ENCODE measurements at regions of chr4 and their contacts with region 1.

Region 1: DNA sequence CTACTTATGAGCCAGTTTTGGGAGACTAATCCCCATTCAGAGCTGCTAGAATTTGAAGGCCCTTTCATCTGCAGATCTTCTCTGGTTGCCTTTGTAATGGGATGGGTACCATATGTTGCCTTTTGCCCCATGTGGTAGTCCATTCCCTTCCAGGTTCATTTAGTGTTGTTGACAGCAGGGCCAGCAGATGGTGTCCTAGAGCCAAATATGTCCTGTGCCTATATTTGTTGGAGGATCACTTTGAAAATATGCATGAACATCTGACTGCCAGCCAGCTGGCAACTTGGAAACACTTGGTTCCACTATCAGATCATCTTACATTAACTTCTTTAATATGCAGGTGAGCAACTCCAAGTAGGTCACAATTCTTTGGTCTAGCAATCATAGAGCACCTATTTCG is 30.4 kb downstream of the CFAP299 start:
- DNase-seq: peak in 3 of 4 experiments; percentile 17 to 53 (median 41)
- ATAC-seq: peak; percentile 87
- H3K4me3 ChIP-seq: no peak overlapping the region
- H3K27ac ChIP-seq: no peak overlapping the region
- H3K4me1 ChIP-seq: no peaks in the 10 kb centered on the region
- H3K27me3 ChIP-seq: no peaks in the 10 kb centered on the region
- CTCF ChIP-seq: peak; percentile 69 to 76 (median 73)
- EP300 ChIP-seq: no peak
- POLR2A ChIP-seq: no peak
- RAD21 ChIP-seq: peak; percentile 91 to 93

Region 2: GRCh38 chr4:78951862-78952472 is 1414.0 kb before region 1 on chr4:
- CTCF ChIA-PET with region 1: interaction called, 3 read pairs
- POLR2A ChIA-PET with region 1: no interaction called
- in situ Hi-C with region 1: no loop called
- intact Hi-C with region 1: loop called (anchors 5 kb)
- DNase-seq: peak; percentile 56 to 70 (median 58)
- ATAC-seq: peak; percentile 86
- H3K4me3 ChIP-seq: no peak overlapping the region
- H3K27ac ChIP-seq: no peak overlapping the region
- H3K4me1 ChIP-seq: peaks cover 0 to 4% of the 10 kb centered on the region in 2 experiments; a peak in 1 of 5 replicates
- H3K27me3 ChIP-seq: no peaks in the 10 kb centered on the region
- CTCF ChIP-seq: peak; percentile 58 to 84 (median 73)
- EP300 ChIP-seq: no peak
- POLR2A ChIP-seq: no peak
- RAD21 ChIP-seq: peak; percentile 76 to 91

Region 3: GRCh38 chr4:80566203-80566872 is 200.4 kb after region 1 on chr4:
- CTCF ChIA-PET with region 1: no interaction called
- POLR2A ChIA-PET with region 1: no interaction called
- in situ Hi-C with region 1: no loop called
- intact Hi-C with region 1: loop called (anchors 10 kb)
- DNase-seq: no peak
- ATAC-seq: no peak
- H3K4me3 ChIP-seq: no peak overlapping the region
- H3K27ac ChIP-seq: no peak overlapping the region
- H3K4me1 ChIP-seq: no peaks in the 10 kb centered on the region; a peak in 1 of 5 replicates
- H3K27me3 ChIP-seq: no peaks in the 10 kb centered on the region
- CTCF ChIP-seq: no peak
- EP300 ChIP-seq: no peak
- POLR2A ChIP-seq: no peak
- RAD21 ChIP-seq: no peak

Region 4: DNA sequence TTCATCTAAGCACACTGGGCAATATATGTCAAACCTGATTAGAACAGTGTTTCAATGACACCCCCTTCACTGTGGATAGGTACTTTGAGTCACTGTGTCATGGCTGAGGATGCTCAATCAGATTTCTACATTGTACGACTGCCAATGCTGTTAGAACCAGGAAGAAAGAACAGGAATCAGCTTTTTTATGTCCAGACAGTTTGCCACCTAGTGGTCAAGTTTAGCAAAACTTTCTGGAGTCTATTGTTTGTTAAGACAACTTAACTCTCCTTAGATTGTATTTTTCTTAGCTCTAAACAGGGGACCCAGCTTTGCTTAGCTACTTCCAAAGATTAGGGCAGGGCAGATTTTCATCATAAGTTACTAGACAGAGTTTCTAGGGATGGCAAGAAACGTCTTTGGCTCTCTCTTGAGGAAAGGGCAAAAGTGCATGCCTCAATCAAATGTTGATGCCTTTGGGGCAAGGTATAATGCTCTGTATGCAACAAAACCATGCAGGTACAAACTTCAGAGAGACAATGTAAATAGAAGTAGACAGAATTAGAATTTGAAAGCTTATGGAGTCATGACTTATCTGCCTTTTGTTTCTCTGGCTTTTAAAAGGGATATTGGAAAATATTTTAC is 624.1 kb after region 1 on chr4:
- CTCF ChIA-PET with region 1: interaction called, 11 read pairs
- POLR2A ChIA-PET with region 1: no interaction called
- in situ Hi-C with region 1: no loop called
- intact Hi-C with region 1: loop called (anchors 1 kb)
- DNase-seq: peak; percentile 20 to 57 (median 24)
- ATAC-seq: peak; percentile 76; the same call in 2 of the 3 replicates
- H3K4me3 ChIP-seq: no peak overlapping the region
- H3K27ac ChIP-seq: no peak overlapping the region
- H3K4me1 ChIP-seq: no peaks in the 10 kb centered on the region
- H3K27me3 ChIP-seq: no peaks in the 10 kb centered on the region
- CTCF ChIP-seq: peak; percentile 40 to 61 (median 60); a peak in 5 of 6 replicates
- EP300 ChIP-seq: no peak
- POLR2A ChIP-seq: no peak
- RAD21 ChIP-seq: peak; percentile 54 to 66

Region 5: GRCh38 chr4:81052119-81053068 is 686.5 kb after region 1 on chr4:
- CTCF ChIA-PET with region 1: interaction called, 8 read pairs
- POLR2A ChIA-PET with region 1: no interaction called
- in situ Hi-C with region 1: no loop called
- intact Hi-C with region 1: loop called (anchors 1 kb)
- DNase-seq: peak; percentile 38 to 69 (median 44)
- ATAC-seq: peak; percentile 90
- H3K4me3 ChIP-seq: no peak overlapping the region
- H3K27ac ChIP-seq: no peak overlapping the region
- H3K4me1 ChIP-seq: no peaks in the 10 kb centered on the region
- H3K27me3 ChIP-seq: no peaks in the 10 kb centered on the region
- CTCF ChIP-seq: peak; percentile 57 to 76 (median 71); a peak in 5 of 6 replicates
- EP300 ChIP-seq: no peak
- POLR2A ChIP-seq: no peak
- RAD21 ChIP-seq: peak; percentile 73 to 78

Measured in K562 (cell line).